Tibial artery (tissue), 4 donors: ENCODE measurements at regions of chr6 and their contacts with region 1.

Region 1: DNA sequence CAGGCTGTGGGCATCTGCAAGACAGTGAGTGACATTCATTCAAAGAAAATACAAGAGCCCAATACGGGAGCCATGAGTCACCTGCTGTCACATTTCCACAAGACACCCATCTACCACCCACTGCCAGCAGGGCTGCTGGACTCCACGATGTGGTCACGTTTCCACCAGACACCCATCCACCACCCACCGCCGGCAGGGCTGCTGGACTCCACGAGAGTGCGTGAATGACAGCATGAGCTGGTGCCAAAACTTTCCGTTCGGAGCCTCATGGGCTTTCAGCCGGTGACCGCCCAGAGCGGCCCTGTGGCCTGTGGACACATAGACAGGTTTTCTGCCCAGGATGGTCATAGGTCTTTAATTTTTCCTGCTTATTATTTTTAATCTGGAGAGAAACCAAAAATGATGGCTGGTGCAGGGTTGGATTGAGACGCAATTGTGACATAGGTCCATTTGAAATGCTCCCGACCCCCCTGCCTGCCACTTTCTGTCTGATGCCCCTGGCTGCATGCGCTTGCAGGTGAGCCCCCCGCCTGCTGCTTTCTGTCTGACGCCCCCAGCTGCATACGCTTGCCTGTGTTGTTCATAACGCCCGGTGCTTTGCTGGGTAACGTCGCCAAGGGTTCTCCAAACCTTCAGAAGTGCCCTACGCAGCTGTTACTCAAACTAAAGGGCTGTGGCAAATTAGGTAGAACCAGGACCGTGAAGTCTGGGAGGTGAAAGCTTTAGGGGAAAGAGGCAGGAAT is 59.1 kb upstream of the SMOC2 start:
- DNase-seq: peak in 1 of 2 donors; percentile 63
- H3K4me3 ChIP-seq: no peak overlapping the region
- H3K27ac ChIP-seq: no peak overlapping the region
- H3K4me1 ChIP-seq: peaks cover 0 to 32% (median 18%) of the 10 kb centered on the region in 4 donors
- H3K27me3 ChIP-seq: no peaks in the 10 kb centered on the region
- CTCF ChIP-seq: peak; percentile 18 to 20

Region 2: DNA sequence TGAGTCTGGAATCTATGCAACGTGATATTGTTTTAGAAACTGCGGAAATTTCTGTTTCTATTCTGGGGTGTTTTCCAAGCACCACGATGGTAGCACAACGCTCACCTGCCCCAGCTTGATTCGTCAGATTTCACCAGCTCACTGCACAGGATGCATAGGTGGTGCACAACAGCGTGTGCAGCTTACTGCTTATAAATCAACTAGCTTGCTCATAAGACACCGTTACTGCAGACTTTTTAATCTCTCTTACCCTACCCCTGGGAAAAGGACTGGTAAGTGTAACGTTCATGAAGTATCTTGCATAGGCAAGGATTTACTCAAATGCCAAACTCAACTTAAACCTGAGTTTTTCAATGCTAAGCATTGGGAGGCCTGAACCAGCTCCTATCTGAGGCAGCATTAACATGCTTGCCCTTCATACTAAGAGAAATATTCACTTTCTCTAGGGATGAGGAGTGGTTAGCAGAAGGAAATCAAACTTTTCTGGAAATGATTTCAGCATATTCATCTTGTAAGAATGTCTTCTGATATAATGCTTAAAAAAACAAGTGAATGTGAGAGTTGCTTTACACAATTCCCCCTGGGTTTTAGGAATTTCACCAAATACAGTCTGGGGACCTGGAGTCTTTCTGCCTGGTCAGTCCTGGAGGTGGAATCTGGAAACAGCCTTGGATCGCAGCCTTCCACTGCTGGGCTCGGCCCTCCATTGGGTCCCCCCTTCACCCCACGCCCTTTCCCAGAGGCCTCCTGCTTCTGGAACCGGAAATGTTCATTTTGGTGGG is 162.9 kb before region 1 on chr6:
- intact Hi-C with region 1: no loop called
- DNase-seq: peak in 1 of 2 donors; percentile 40
- H3K4me3 ChIP-seq: no peak overlapping the region
- H3K27ac ChIP-seq: peak overlapping the region; percentile 50 to 55
- H3K4me1 ChIP-seq: peaks cover 0 to 30% (median 14%) of the 10 kb centered on the region in 4 donors
- H3K27me3 ChIP-seq: no peaks in the 10 kb centered on the region
- CTCF ChIP-seq: no peak

Region 3: GRCh38 chr6:168417679-168418557 is 36.0 kb after region 1 on chr6:
- intact Hi-C with region 1: loop called (anchors 1 kb)
- DNase-seq: no peak
- H3K4me3 ChIP-seq: peak overlapping the region in 1 of 2 donors; percentile 13
- H3K27ac ChIP-seq: no peak overlapping the region
- H3K4me1 ChIP-seq: peaks cover 0 to 39% (median 29%) of the 10 kb centered on the region in 4 donors
- H3K27me3 ChIP-seq: no peaks in the 10 kb centered on the region
- CTCF ChIP-seq: no peak

Region 4: GRCh38 chr6:168506460-168506859 is 124.6 kb after region 1 on chr6:
- intact Hi-C with region 1: no loop called
- DNase-seq: no peak
- H3K4me3 ChIP-seq: no peak overlapping the region
- H3K27ac ChIP-seq: no peak overlapping the region
- H3K4me1 ChIP-seq: no peaks in the 10 kb centered on the region
- H3K27me3 ChIP-seq: no peaks in the 10 kb centered on the region
- CTCF ChIP-seq: no peak